GM13976 (cell line): ENCODE measurements at regions of chr15 and their contacts with region 1.

Region 1: GRCh38 chr15:75307778-75308391 is 25.2 kb downstream of the GOLGA6D start:
- DNase-seq: peak; percentile 51
- CTCF ChIP-seq: peak; percentile 37

Region 2: GRCh38 chr15:75023181-75023871 is 284.6 kb before region 1 on chr15 and contains the start of gene PPCDC:
- in situ Hi-C with region 1: loop called (anchors 10 kb)
- DNase-seq: peak; percentile 99
- CTCF ChIP-seq: no peak

Region 3: DNA sequence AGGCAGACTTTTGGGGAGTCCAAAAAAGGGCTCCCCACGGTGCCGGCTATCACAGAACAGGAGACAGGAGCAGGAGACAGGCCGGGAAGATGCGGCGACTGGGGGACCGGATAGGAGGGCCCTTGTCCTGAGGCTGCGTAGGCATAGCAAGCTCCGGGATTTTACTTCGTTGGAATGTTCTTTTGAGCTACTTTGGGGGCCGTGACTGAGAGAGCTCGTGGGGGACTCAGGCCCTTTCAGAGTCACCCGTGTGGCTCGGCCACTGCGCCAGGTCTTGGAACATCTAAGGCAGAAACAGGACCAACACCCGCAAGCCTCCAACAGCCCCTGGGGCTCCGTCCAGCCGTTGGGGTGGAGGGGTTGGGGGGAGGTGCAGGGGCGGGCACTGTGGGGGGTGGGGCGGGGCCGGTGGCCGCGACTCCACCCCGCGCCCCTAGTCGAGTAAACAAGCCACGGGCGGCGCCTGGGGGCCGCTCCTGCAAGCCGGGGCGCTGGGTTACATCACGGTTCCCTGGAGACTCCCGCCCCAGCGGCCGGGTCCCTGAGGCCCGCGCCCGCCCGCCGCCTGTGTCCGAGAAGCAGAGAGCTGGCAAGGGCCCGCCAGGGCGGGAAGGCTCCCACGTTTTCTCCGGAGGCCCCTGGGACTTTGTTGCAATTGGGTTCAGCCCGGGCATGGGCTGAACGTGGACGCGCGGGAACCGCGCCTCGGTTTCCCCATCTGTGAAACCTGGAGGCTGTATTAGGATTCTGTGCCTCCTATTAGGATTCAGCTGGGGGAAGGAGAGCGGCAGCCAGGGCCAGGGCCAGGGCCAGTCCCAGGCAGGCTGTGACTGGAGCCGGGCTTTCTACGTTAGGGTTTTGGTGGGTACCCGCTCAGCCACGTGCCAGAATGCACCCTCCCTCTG is 129.5 kb before region 1 on chr15:
- in situ Hi-C with region 1: no loop called
- DNase-seq: peak; percentile 72
- CTCF ChIP-seq: no peak

Region 4: DNA sequence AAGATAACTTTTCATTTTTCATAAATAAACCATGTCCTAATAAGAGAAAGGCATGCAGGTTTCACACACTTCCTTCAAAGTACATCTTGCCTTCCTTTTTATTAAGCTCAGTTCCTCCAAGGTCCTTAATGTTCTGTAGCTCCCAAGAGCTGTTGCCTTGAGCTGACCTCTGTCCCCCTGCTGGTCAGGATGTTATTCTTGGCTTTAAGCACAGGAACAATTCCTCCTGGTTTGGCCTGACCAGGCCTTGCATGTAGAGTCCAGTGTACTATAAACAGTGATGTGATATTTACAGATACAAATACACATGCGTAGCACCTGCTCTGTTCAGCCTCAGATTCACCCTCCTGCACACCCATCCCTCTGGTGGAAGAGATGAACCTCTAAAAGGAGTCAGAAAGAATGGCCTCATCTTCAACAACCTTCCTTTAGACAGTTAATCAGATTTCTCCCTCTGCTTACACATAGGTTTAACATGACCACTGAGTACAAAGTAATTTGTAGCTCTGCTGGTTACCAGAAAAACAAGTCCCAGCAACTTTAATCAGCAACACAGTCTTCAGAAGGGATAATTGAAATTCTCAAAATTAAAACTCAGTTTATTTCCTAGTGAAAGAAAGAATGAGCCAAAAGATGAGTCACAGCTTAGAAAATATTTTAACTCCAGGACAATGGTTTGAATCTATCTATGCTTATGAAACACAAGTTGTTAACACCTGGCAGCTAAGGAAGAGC is 224.7 kb after region 1 on chr15:
- in situ Hi-C with region 1: no loop called
- DNase-seq: no peak
- CTCF ChIP-seq: peak; percentile 12